ENCODE measurements at regions of chr2 and their contacts with region 1.

Region 1: DNA sequence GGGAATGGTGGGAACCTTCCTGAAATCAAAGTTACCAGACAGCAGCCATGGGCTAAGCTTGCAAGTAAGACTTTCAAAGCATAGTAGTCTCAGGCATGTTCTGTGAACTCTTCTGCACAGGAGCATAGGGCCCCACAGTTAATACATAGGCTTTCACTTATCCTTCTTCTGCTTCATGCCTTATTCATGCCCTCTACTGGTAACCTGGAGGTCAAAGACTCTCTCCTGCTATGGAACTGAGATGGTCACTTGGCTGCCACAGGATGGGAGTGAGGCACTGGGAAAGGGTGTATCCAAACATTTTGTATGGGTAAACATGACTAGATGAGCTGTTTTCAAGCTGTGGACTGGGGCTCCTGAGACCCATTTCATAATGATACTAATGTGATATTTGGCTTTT is 49.1 kb upstream of the ZNF638 start:
- DNase-seq: no peak
- ATAC-seq: no peak
- H3K4me3 ChIP-seq: no peak overlapping the region
- H3K4me3 Mint-ChIP-seq: no peak overlapping the region
- H3K27ac ChIP-seq: no peak overlapping the region
- H3K27ac Mint-ChIP-seq: no peak overlapping the region
- H3K4me1 ChIP-seq: peaks cover 0 to 3% of the 10 kb centered on the region in 2 donors
- H3K4me1 Mint-ChIP-seq: peaks cover 5% of the 10 kb centered on the region in 7 donors
- H3K27me3 ChIP-seq: peaks cover 6 to 12% of the 10 kb centered on the region in 2 donors
- H3K27me3 Mint-ChIP-seq: peaks cover 54 to 71% (median 59%) of the 10 kb centered on the region in 5 donors

Region 2: DNA sequence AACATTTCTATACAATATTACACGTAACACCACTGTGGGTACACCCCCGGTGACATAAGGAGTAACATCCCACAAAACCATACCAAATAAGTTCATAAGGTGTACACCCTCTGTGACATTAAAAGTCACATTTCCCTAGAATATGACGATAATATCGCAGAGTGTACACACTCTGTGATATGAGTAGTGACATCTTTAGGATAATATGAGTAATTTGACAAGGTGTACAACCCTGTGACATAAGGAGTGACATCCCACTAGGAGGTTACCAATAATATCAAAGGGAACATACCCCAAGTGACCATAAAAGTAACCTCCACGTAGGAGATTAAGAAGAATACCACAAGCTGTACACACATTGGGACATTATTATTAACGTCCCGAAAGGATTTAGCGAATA is 263.9 kb before region 1 on chr2:
- CTCF ChIA-PET with region 1: no interaction called
- POLR2A ChIA-PET with region 1: no interaction called
- intact Hi-C with region 1: loop called in 1 of 2 experiments (anchors 5 kb)
- DNase-seq: no peak
- ATAC-seq: peak; percentile 20
- H3K4me3 ChIP-seq: no peak overlapping the region
- H3K4me3 Mint-ChIP-seq: no peak overlapping the region
- H3K27ac ChIP-seq: no peak overlapping the region
- H3K27ac Mint-ChIP-seq: no peak overlapping the region
- H3K4me1 ChIP-seq: no peaks in the 10 kb centered on the region
- H3K4me1 Mint-ChIP-seq: peaks cover 4 to 7% (median 7%) of the 10 kb centered on the region in 7 donors
- H3K27me3 ChIP-seq: no peaks in the 10 kb centered on the region
- H3K27me3 Mint-ChIP-seq: peaks cover 0 to 6% (median 0%) of the 10 kb centered on the region in 5 donors

Region 3: GRCh38 chr2:71243634-71244304 is 38.7 kb before region 1 on chr2:
- CTCF ChIA-PET with region 1: no interaction called
- POLR2A ChIA-PET with region 1: no interaction called
- intact Hi-C with region 1: loop called in 1 of 2 experiments (anchors 2 kb)
- DNase-seq: no peak
- ATAC-seq: no peak
- H3K4me3 ChIP-seq: no peak overlapping the region
- H3K4me3 Mint-ChIP-seq: no peak overlapping the region
- H3K27ac ChIP-seq: no peak overlapping the region
- H3K27ac Mint-ChIP-seq: no peak overlapping the region
- H3K4me1 ChIP-seq: no peaks in the 10 kb centered on the region
- H3K4me1 Mint-ChIP-seq: no peaks in the 10 kb centered on the region
- H3K27me3 ChIP-seq: no peaks in the 10 kb centered on the region
- H3K27me3 Mint-ChIP-seq: peaks cover 14 to 37% (median 17%) of the 10 kb centered on the region in 5 donors

Region 4: GRCh38 chr2:71269511-71270090 is 12.9 kb before region 1 on chr2:
- CTCF ChIA-PET with region 1: no interaction called
- POLR2A ChIA-PET with region 1: no interaction called
- intact Hi-C with region 1: no loop called
- DNase-seq: no peak
- ATAC-seq: no peak
- H3K4me3 ChIP-seq: no peak overlapping the region
- H3K4me3 Mint-ChIP-seq: no peak overlapping the region
- H3K27ac ChIP-seq: no peak overlapping the region
- H3K27ac Mint-ChIP-seq: no peak overlapping the region
- H3K4me1 ChIP-seq: no peaks in the 10 kb centered on the region
- H3K4me1 Mint-ChIP-seq: no peaks in the 10 kb centered on the region
- H3K27me3 ChIP-seq: no peaks in the 10 kb centered on the region
- H3K27me3 Mint-ChIP-seq: peaks cover 48 to 55% (median 51%) of the 10 kb centered on the region in 5 donors

Region 5: GRCh38 chr2:72973566-72974435 is 1691.3 kb after region 1 on chr2:
- CTCF ChIA-PET with region 1: no interaction called
- POLR2A ChIA-PET with region 1: no interaction called
- intact Hi-C with region 1: no loop called
- DNase-seq: peak in 6 of 9 donors; percentile 13 to 40 (median 20)
- ATAC-seq: peak; percentile 86
- H3K4me3 ChIP-seq: no peak overlapping the region
- H3K4me3 Mint-ChIP-seq: no peak overlapping the region
- H3K27ac ChIP-seq: no peak overlapping the region
- H3K27ac Mint-ChIP-seq: no peak overlapping the region
- H3K4me1 ChIP-seq: no peaks in the 10 kb centered on the region
- H3K4me1 Mint-ChIP-seq: no peaks in the 10 kb centered on the region
- H3K27me3 ChIP-seq: no peaks in the 10 kb centered on the region
- H3K27me3 Mint-ChIP-seq: peaks cover 0 to 7% (median 0%) of the 10 kb centered on the region in 5 donors

Measured in naive thymus-derived CD4-positive, alpha-beta T cell (primary cell).